PC-9 (cell line): ENCODE measurements at regions of chr11 and their contacts with region 1.

Region 1: DNA sequence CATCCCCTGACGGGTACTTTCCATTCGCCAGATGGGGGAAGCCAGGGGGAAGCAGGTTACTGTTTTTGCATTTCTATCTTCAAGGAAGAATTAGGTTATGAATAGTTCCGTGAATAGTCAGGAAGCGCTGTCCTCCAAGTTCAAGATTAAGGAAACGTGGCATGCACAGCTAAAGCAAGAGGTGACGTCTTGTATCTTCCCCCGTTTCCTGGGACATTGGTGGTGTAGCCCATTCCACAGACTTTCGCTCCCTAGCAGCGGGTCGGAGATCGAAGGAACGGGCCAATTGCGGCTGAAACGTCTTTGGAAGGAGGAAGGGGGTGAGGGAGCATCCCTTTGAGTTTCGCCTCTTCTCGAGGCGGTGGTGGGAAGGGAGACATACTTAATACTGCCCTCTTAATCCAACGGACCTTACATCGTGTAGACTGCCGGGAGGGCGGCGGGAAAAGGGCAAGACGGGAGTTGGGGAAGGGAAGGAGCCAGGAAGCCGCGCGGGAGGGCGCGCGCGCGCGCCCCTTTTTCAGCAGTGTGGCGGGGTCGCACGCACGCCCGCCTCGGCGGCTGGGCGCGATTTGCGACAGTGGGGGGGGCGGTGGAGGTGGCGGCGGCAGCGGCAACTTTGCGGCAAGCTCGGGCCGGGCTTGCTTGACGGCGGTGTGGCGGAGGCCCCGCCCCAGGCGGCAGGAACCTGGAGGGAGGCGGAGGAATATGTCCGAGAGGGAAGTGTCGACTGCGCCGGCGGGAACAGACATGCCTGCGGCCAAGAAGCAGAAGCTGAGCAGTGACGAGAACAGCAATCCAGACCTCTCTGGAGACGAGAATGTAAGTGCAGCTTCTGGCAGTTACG is at the start of gene EED:
- DNase-seq: peak; percentile 93 to 94
- H3K4me3 ChIP-seq: peak within 1 kb of the TSS; percentile 67
- H3K27ac ChIP-seq: peak within 1 kb of the TSS; percentile 92
- H3K4me1 ChIP-seq: peaks cover 45% of the 10 kb centered on the region
- H3K27me3 ChIP-seq: no peaks in the 10 kb centered on the region
- CTCF ChIP-seq: 0 out of 2 replicates have a peak, but pooled peaks have one; percentile 18
- total RNA-seq, gene EED: 33.4 and 37.4 TPM in 2 replicates

Region 2: GRCh38 chr11:85627998-85628770 is 616.6 kb before region 1 on chr11 and contains the start of gene TMEM126B:
- CTCF ChIA-PET with region 1: no interaction called
- POLR2A ChIA-PET with region 1: interaction called, 9 read pairs
- intact Hi-C with region 1: loop called (anchors 2 kb)
- DNase-seq: peak; percentile 96 to 99
- H3K4me3 ChIP-seq: peak within 1 kb of the TSS; percentile 79
- H3K27ac ChIP-seq: peak within 1 kb of the TSS; percentile 65
- H3K4me1 ChIP-seq: peaks cover 29% of the 10 kb centered on the region
- H3K27me3 ChIP-seq: no peaks in the 10 kb centered on the region
- CTCF ChIP-seq: no peak
- total RNA-seq, gene TMEM126B: 32.6 and 38.1 TPM in 2 replicates

Region 3: DNA sequence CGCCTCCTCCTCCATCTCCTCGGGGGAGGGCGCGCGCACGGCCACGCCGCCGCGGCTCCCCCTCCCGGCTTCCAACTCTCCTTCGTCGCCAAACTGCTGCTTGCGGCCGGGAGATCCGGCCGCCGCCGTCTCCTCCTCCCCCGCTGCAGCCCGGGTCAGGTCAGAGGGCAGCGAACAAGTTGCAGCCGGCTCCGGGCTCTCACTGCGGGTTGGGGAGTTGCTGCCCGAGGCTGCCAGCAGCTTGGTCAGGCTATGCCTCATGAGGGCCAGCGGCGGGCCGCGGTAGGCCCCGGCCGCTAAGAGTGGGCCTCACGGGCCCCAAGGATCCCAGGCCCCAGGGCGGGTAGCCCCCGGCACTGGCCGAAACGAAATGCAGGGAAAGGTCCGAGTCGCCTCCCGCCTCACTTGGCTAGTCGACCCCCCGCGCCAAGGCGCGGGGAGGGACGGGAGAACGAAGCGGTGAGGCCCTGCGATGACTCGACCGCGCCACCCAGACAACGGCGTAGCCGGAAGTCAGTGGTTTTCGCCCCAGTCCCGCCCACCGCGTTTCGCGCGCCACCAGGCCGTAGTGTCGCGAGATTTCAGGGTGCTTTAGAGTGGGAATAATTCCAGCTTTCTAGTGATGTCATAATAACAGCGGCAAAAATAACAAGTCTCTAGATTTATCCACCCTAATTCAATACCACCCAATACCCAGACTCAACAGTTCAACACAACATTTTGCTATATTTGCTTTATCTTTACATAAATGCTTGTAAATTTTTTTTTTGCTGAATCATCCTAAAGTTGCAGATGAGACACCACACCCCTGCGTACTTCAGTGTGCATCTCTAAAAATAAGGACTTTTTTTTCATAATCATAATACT is 579.9 kb before region 1 on chr11 and contains the start of gene CREBZF:
- CTCF ChIA-PET with region 1: no interaction called
- POLR2A ChIA-PET with region 1: no interaction called
- intact Hi-C with region 1: loop called (anchors 10 kb)
- DNase-seq: peak; percentile 88 to 93
- H3K4me3 ChIP-seq: peak within 1 kb of the TSS; percentile 98
- H3K27ac ChIP-seq: peak within 1 kb of the TSS; percentile 93
- H3K4me1 ChIP-seq: peaks cover 34% of the 10 kb centered on the region
- H3K27me3 ChIP-seq: no peaks in the 10 kb centered on the region
- CTCF ChIP-seq: no peak
- total RNA-seq, gene CREBZF: 60.3 and 66.1 TPM in 2 replicates

Region 4: DNA sequence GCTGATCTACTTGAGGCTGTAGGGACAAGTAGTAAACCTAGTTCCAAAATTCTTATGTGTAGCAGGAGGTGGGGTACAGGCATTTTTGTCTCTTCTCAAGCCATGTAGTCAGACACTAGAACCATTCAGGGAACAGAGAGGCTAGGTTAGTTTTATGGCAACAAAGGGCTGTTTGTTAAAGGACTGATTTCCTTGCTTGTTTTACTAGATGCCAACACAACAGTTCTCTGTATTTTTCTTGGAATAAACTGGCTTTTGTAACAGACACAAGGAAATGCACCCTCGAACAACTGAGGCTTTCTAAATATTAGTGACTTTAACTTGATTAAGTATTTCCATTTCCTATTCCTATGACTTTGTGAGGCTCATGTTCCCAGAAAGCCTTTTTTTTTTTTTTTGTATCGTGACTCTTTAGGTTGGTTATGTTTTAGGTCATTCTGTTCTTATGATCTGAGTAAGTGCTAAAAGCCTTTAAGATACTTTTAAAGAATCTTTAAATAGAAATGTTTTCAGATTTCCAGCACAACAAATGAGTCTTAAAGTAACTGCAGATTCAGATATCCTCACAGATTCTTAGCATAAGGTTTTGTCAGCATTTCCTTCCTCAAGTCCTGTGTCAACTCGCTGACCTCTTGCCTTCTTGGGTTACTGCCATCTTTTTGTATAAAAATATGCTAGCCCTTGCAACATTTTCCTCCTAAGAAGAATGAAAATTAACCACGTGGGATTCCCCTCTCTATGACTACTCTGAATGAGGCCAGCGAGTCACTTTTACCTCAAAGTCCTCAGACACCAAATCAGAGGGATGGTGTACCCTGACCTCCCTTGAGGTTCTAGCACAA is 297.1 kb before region 1 on chr11:
- CTCF ChIA-PET with region 1: no interaction called
- POLR2A ChIA-PET with region 1: interaction called, 10 read pairs
- intact Hi-C with region 1: no loop called
- DNase-seq: peak; percentile 38 to 86
- H3K4me3 ChIP-seq: no peak overlapping the region
- H3K27ac ChIP-seq: peak overlapping the region; percentile 35; the same call in 1 of the 2 replicates
- H3K4me1 ChIP-seq: peaks cover 26% of the 10 kb centered on the region
- H3K27me3 ChIP-seq: no peaks in the 10 kb centered on the region
- CTCF ChIP-seq: no peak

Region 5: GRCh38 chr11:85961930-85962363 is 282.8 kb before region 1 on chr11:
- CTCF ChIA-PET with region 1: no interaction called
- POLR2A ChIA-PET with region 1: no interaction called
- intact Hi-C with region 1: no loop called
- DNase-seq: no peak
- H3K4me3 ChIP-seq: no peak overlapping the region
- H3K27ac ChIP-seq: no peak overlapping the region
- H3K4me1 ChIP-seq: no peaks in the 10 kb centered on the region
- H3K27me3 ChIP-seq: no peaks in the 10 kb centered on the region
- CTCF ChIP-seq: no peak

Region 6: GRCh38 chr11:86091566-86091965 is 153.2 kb before region 1 on chr11:
- CTCF ChIA-PET with region 1: no interaction called
- POLR2A ChIA-PET with region 1: no interaction called
- intact Hi-C with region 1: no loop called
- DNase-seq: no peak
- H3K4me3 ChIP-seq: no peak overlapping the region
- H3K27ac ChIP-seq: no peak overlapping the region
- H3K4me1 ChIP-seq: no peaks in the 10 kb centered on the region
- H3K27me3 ChIP-seq: no peaks in the 10 kb centered on the region
- CTCF ChIP-seq: no peak

Region 7: GRCh38 chr11:86183694-86184093 is 61.1 kb before region 1 on chr11:
- CTCF ChIA-PET with region 1: no interaction called
- POLR2A ChIA-PET with region 1: no interaction called
- intact Hi-C with region 1: loop called (anchors 2 kb)
- DNase-seq: peak in 1 of 2 experiments; percentile 48
- H3K4me3 ChIP-seq: peak overlapping the region; percentile 29; the same call in 1 of the 2 replicates
- H3K27ac ChIP-seq: peak overlapping the region; percentile 80
- H3K4me1 ChIP-seq: peaks cover 23% of the 10 kb centered on the region
- H3K27me3 ChIP-seq: no peaks in the 10 kb centered on the region
- CTCF ChIP-seq: no peak

Region 8: GRCh38 chr11:86211619-86212018 is 33.1 kb before region 1 on chr11:
- CTCF ChIA-PET with region 1: no interaction called
- POLR2A ChIA-PET with region 1: no interaction called
- intact Hi-C with region 1: no loop called
- DNase-seq: no peak
- H3K4me3 ChIP-seq: no peak overlapping the region
- H3K27ac ChIP-seq: no peak overlapping the region
- H3K4me1 ChIP-seq: 0 out of 2 replicates have a peak, but pooled peaks cover 11% of the 10 kb centered on the region
- H3K27me3 ChIP-seq: no peaks in the 10 kb centered on the region
- CTCF ChIP-seq: no peak

Region 9: DNA sequence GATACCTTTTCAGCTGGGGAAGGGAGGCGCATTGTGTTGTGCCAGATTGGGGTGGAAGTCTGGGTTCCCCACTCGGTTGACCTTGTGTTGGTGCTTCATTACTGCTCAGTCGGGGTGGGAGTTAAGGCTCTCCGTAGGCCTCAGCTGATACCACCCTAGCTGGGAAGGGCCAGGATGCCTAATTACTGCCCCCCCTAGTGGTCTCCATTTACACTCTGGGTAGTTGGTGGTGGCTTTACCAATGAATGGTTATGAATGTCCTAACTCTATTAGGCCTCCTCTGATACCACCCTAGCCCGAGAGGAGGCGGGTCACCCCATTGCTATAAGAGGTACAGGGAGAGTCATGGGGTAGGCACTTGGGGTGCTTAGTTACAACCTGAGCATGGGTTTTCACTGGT is 29.8 kb after region 1 on chr11:
- CTCF ChIA-PET with region 1: no interaction called
- POLR2A ChIA-PET with region 1: no interaction called
- intact Hi-C with region 1: no loop called
- DNase-seq: no peak
- H3K4me3 ChIP-seq: no peak overlapping the region
- H3K27ac ChIP-seq: no peak overlapping the region
- H3K4me1 ChIP-seq: no peaks in the 10 kb centered on the region
- H3K27me3 ChIP-seq: no peaks in the 10 kb centered on the region
- CTCF ChIP-seq: peak; percentile 48; the same call in 1 of the 2 replicates

Region 10: GRCh38 chr11:86302100-86302793 is 57.5 kb after region 1 on chr11 and contains the start of gene HIKESHI:
- CTCF ChIA-PET with region 1: no interaction called
- POLR2A ChIA-PET with region 1: no interaction called
- intact Hi-C with region 1: loop called (anchors 2 kb)
- DNase-seq: peak; percentile 94 to 96
- H3K4me3 ChIP-seq: peak within 1 kb of the TSS; percentile 78
- H3K27ac ChIP-seq: peak within 1 kb of the TSS; percentile 55
- H3K4me1 ChIP-seq: peaks cover 13% of the 10 kb centered on the region
- H3K27me3 ChIP-seq: no peaks in the 10 kb centered on the region
- CTCF ChIP-seq: no peak
- total RNA-seq, gene HIKESHI: 34.5 and 42.0 TPM in 2 replicates